Sigmoid colon (tissue), 7 donors: ENCODE measurements at regions of chr14 and their contacts with region 1.

Region 1: GRCh38 chr14:24431569-24432258 is 2.0 kb downstream of the KHNYN start:
- DNase-seq: peak; percentile 95
- H3K4me3 ChIP-seq: peak overlapping the region; percentile 73 to 87 (median 76)
- H3K27ac ChIP-seq: peak overlapping the region; percentile 94 to 96 (median 95)
- H3K4me1 ChIP-seq: peaks cover 0 to 46% (median 41%) of the 10 kb centered on the region in 4 donors
- H3K27me3 ChIP-seq: no peaks in the 10 kb centered on the region
- CTCF ChIP-seq: peak; percentile 79 to 92 (median 84)
- EP300 ChIP-seq: no peak
- POLR2A ChIP-seq: no peak

Region 2: DNA sequence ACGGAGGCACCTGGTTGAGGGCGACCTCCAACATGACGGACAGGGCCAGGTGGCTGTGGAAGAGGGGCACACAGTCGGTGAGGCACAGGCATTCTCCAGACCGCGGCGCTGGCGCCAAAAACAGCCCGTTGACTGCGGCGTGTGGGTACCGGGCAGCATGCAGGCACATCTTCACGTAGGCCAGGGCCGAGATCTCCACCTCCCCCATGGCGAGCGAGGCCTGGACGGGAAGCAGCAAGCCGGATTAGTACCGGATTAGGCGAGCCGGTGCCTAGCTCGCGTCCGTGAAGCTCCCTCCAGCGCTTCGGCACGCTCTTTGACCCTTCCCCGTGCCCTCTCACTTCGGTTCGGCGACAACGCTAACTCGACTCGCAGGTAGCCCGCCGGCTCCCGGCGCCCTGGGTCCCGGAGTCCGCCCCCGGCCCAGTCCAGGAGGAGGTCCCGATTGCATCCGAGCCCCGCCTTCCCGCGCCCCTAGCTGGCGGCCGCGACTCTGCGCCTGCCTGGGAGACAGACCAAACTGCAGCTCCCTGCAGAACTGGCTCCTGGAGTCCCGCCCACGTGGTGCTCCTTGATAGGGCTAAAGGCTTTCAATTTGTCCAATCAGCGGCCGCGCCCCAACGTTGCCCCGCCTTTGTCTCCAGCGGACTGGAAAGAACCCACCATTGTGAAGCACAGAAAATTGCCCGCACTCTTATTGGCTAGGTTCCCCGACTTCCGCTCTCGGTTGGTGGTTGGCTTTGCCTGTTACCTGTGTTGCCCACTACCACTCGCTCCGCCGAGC is 290.4 kb before region 1 on chr14 and contains the start of gene EMC9:
- intact Hi-C with region 1: loop called (anchors 10 kb)
- DNase-seq: peak; percentile 100
- H3K4me3 ChIP-seq: peak within 1 kb of the TSS; percentile 73 to 91 (median 81)
- H3K27ac ChIP-seq: peak within 1 kb of the TSS; percentile 92 to 98 (median 96)
- H3K4me1 ChIP-seq: peaks cover 0 to 61% (median 51%) of the 10 kb centered on the region in 4 donors
- H3K27me3 ChIP-seq: no peaks in the 10 kb centered on the region
- CTCF ChIP-seq: peak; percentile 36 to 75 (median 64)
- EP300 ChIP-seq: no peak
- POLR2A ChIP-seq: peak; percentile 83 to 88
- total RNA-seq, gene EMC9: 5.0 to 20.9 (median 12.9) TPM

Region 3: DNA sequence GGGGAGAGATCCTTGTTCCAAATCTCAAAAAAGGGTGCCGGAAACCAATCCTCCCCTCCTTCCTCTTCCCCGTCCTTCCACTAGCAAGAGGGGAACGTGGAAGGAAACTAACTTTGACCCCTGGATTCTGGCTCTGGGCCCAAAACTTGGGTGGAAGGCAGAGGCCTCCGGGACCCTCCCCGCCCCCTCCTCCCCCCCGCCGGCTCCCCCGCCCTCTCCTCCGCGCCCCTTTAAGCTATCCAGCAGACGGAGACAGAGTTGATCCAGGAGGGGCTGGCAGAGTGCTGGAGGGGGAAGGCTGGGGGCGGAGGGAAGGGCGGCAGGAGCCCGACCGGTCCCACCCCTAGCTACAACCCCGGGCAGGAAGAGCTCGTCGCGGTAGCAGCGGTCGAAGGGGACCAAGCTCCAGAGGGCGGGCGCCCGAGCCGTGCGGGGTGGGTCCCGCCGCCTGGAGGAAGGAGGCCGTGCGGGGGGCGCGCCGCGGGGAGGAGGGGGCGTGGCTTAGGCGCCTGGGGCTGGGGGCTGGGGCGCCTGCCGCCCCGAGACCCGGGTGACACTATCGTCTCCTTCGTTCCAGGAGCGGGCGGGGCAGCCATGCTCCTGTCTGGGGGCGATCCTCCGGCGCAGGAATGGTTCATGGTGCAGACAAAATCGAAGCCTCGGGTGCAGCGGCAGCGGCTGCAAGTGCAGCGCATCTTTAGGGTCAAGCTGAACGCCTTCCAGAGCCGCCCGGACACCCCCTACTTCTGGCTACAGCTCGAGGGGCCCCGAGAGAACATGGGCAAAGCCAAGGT is 32.9 kb before region 1 on chr14 and contains the start of gene NYNRIN:
- intact Hi-C with region 1: loop called (anchors 2 kb)
- DNase-seq: peak; percentile 82
- H3K4me3 ChIP-seq: peak within 1 kb of the TSS; percentile 73 to 85 (median 78)
- H3K27ac ChIP-seq: peak within 1 kb of the TSS; percentile 76 to 82 (median 78)
- H3K4me1 ChIP-seq: peaks cover 0 to 59% (median 50%) of the 10 kb centered on the region in 4 donors
- H3K27me3 ChIP-seq: no peaks in the 10 kb centered on the region
- CTCF ChIP-seq: no peak
- EP300 ChIP-seq: no peak
- POLR2A ChIP-seq: no peak
- total RNA-seq, gene NYNRIN: 6.8 to 17.4 (median 7.0) TPM